ENCODE measurements at regions of chr20 and their contacts with region 1.

Region 1: GRCh38 chr20:33301192-33301930 is 18.3 kb downstream of the BPIFB1 start:
- DNase-seq: no peak
- ATAC-seq: no peak
- H3K4me3 ChIP-seq: no peak overlapping the region
- H3K27ac ChIP-seq: no peak overlapping the region
- H3K4me1 ChIP-seq: peaks cover 3% of the 10 kb centered on the region
- H3K27me3 ChIP-seq: no peaks in the 10 kb centered on the region
- CTCF ChIP-seq: no peak
- POLR2A ChIP-seq: no peak

Region 2: DNA sequence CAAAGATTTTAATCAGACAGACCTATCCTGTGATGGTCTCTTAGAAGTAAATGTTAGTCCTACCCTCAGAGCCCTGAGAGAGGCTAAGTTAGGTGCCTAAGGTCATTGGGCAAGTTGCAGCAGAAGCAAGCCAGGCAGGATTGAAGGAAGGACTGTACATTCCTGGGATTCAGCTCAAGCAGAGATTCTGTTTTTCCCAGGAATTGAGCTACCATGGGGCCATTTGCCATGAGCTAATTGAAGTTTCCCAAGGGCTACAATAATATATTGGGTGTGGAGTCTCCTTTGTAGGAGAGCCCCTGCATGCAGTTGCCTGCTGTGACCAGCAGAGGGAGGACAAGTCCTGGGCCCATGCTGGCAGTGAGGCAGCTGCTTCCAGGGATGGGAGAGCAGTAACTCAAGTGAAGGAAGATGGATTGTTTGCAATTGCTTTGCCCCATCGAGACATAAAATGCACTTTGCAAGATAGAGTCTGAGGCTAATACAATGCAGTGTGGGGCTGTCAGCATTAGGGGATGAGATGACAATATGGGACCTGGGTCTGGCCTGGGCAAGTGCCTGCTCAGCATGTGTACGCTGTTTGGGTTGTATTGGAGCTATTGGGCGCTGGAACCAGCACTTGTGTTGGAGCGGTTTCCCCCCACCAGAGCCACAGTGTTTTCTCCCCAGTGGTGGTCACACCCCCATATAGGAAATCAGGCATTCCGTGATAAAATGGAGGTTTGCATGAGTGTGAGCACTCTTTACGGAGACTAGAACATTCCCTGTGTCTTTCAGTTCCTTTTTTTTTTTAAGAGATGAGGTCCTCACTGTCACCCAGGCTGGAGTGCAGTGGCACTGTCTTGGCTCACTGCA is 511.2 kb before region 1 on chr20:
- intact Hi-C with region 1: loop called (anchors 10 kb)
- DNase-seq: peak; percentile 73 to 80 (median 74)
- ATAC-seq: peak; percentile 92
- H3K4me3 ChIP-seq: no peak overlapping the region
- H3K27ac ChIP-seq: no peak overlapping the region
- H3K4me1 ChIP-seq: no peaks in the 10 kb centered on the region
- H3K27me3 ChIP-seq: no peaks in the 10 kb centered on the region
- CTCF ChIP-seq: peak; percentile 88 to 99 (median 95)
- POLR2A ChIP-seq: no peak

Measured in body of pancreas (tissue), 4 donors.